ENCODE measurements at regions of chr12 and their contacts with region 1.

Region 1: DNA sequence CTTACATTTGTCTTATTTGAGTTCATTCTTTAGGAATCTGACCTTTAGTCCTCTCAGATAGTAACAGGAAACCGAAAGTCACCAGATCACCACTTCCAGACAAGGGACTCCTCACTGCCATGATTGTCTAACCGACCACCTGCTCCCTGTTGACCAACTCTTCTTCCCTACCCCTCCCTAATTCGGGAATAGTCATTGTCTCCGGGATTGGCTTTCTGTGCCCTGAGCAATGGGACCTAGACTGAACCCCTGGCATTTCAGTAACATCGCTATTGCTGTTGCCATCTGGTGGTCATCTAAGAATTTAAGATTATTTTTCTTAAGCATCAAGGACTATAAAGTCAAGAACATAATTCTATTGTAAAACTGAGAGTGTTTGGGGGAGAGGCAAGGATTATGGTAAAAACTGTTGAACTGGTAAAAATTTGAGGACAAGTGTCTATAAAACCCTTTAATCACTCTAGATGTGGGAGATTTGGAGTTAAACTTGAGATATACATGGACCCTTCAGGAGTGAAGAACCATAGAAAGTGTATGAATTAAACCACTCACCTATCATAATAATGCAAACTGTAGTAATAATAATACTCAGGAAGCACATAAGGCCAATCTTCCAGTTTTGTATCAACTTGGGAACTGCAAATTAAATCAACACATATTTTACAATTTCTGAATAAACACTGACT is 6.3 kb downstream of the CLEC2A start:
- DNase-seq: peak; percentile 5
- H3K4me3 Mint-ChIP-seq: peak overlapping the region; percentile 47
- H3K27ac Mint-ChIP-seq: no peak overlapping the region
- H3K4me1 Mint-ChIP-seq: no peaks in the 10 kb centered on the region
- H3K27me3 Mint-ChIP-seq: peaks cover 4% of the 10 kb centered on the region
- CTCF ChIP-seq: peak; percentile 13

Region 2: GRCh38 chr12:9750276-9751203 is 175.3 kb before region 1 on chr12:
- CTCF ChIA-PET with region 1: interaction called, 3 read pairs
- intact Hi-C with region 1: loop called (anchors 1 kb)
- DNase-seq: peak; percentile 55
- H3K4me3 Mint-ChIP-seq: no peak overlapping the region
- H3K27ac Mint-ChIP-seq: no peak overlapping the region
- H3K4me1 Mint-ChIP-seq: no peaks in the 10 kb centered on the region
- H3K27me3 Mint-ChIP-seq: no peaks in the 10 kb centered on the region
- CTCF ChIP-seq: peak; percentile 73

Region 3: GRCh38 chr12:9813821-9814809 is 111.7 kb before region 1 on chr12:
- CTCF ChIA-PET with region 1: interaction called, 3 read pairs
- intact Hi-C with region 1: loop called (anchors 1 kb)
- DNase-seq: peak; percentile 91
- H3K4me3 Mint-ChIP-seq: peak overlapping the region; percentile 71
- H3K27ac Mint-ChIP-seq: no peak overlapping the region
- H3K4me1 Mint-ChIP-seq: no peaks in the 10 kb centered on the region
- H3K27me3 Mint-ChIP-seq: peaks cover 26% of the 10 kb centered on the region
- CTCF ChIP-seq: peak; percentile 86